ENCODE measurements at regions of chr2 and their contacts with region 1.

Region 1: GRCh38 chr2:133886735-133887660 is 318.7 kb upstream of the NCKAP5 start:
- DNase-seq: peak; percentile 51 to 68
- ATAC-seq: peak; percentile 57 to 89 (median 80)
- H3K4me3 ChIP-seq: no peak overlapping the region
- H3K27ac ChIP-seq: no peak overlapping the region
- H3K4me1 ChIP-seq: peaks cover 0 to 16% (median 10%) of the 10 kb centered on the region in 9 donors
- H3K27me3 ChIP-seq: peaks cover 0 to 5% (median 0%) of the 10 kb centered on the region in 7 donors
- CTCF ChIP-seq: peak; percentile 29 to 74 (median 62)

Region 2: GRCh38 chr2:134039912-134040581 is 153.0 kb after region 1 on chr2:
- intact Hi-C with region 1: no loop called
- DNase-seq: no peak
- ATAC-seq: no peak
- H3K4me3 ChIP-seq: no peak overlapping the region
- H3K27ac ChIP-seq: no peak overlapping the region
- H3K4me1 ChIP-seq: no peaks in the 10 kb centered on the region
- H3K27me3 ChIP-seq: peaks cover 0 to 3% (median 0%) of the 10 kb centered on the region in 7 donors
- CTCF ChIP-seq: no peak

Region 3: DNA sequence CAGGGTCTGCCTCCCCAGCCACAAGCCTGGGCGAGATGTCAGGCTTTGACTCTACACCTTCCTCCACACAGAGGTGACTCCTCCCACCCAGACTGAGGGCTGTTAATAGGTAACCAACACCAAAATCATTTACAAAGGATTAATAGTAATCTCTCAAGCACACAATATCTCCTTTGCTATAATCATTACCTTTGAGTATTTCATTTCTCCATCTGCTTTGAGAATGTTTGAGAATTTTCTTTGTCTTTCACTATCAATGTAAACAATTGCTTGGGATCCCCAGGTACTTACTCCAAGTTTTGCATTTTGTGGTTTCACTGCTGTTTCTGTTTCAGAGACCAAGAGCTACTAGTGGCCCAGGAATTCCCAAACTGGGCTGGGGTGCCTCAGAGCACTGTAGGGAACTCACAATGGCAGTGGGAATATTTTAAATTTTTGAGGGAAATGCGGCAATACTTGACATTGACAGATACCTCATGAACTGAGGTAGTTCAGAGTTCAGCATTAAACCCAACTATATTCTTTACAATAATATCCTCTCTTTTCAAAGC is 200.4 kb after region 1 on chr2:
- intact Hi-C with region 1: loop called in 1 of 10 experiments (anchors 10 kb)
- DNase-seq: no peak
- ATAC-seq: peak in 1 of 8 donors; percentile 49
- H3K4me3 ChIP-seq: no peak overlapping the region
- H3K27ac ChIP-seq: peak overlapping the region in 2 of 10 donors; percentile 24 to 53
- H3K4me1 ChIP-seq: peaks cover 0 to 11% (median 0%) of the 10 kb centered on the region in 9 donors
- H3K27me3 ChIP-seq: no peaks in the 10 kb centered on the region
- CTCF ChIP-seq: no peak

Region 4: DNA sequence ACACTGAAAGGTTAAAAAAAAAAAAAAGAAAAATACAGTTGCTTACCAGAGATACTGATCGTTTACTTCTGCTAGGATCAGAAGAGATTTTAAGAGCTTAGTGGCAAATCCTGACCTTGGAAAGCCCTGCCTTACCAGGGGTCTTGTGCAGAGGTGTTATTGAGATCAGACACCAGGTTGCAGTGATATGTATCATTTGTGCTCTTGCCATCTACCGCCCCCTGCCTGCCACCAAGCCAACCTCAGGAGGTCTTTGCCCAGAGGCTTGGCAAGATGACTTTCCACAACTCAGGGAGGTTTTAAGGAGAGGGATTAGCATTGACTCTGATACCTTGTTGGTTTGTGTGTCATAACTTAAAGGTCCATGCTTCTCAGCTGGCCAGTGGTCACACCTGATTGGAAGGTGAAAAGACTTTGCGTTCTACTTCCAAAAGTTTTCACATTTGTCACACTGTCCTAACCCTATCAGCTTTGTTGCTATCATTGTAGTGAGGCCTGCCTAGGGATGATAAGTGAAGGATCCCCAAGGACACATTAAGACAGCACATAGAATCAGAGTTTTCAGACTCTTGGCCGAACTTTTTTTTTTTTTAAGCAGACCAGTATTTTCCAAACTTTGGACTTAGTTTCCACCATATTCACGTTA is 320.7 kb after region 1 on chr2:
- intact Hi-C with region 1: loop called in 1 of 10 experiments (anchors 10 kb)
- DNase-seq: peak; percentile 52 to 60
- ATAC-seq: peak; percentile 63 to 86 (median 80)
- H3K4me3 ChIP-seq: no peak overlapping the region
- H3K27ac ChIP-seq: peak overlapping the region in 5 of 10 donors; percentile 3 to 63 (median 36)
- H3K4me1 ChIP-seq: peaks cover 14 to 58% (median 47%) of the 10 kb centered on the region in 9 donors
- H3K27me3 ChIP-seq: no peaks in the 10 kb centered on the region
- CTCF ChIP-seq: peak; percentile 38 to 76 (median 66)

Region 5: GRCh38 chr2:134253804-134254203 is 366.8 kb after region 1 on chr2 and contains the start of gene MGAT5:
- intact Hi-C with region 1: loop called in 5 of 10 experiments (anchors 5 to 10 kb)
- DNase-seq: no peak
- ATAC-seq: peak in 6 of 8 donors; percentile 5 to 70 (median 31)
- H3K4me3 ChIP-seq: no peak within 1 kb of the TSS
- H3K27ac ChIP-seq: peak within 1 kb of the TSS in 5 of 10 donors; percentile 0 to 37 (median 17)
- H3K4me1 ChIP-seq: peaks cover 5 to 75% (median 69%) of the 10 kb centered on the region in 9 donors
- H3K27me3 ChIP-seq: no peaks in the 10 kb centered on the region
- CTCF ChIP-seq: no peak
- total RNA-seq, gene MGAT5: 68.9 to 111 (median 94.6) TPM

Region 6: GRCh38 chr2:134402410-134402809 is 515.4 kb after region 1 on chr2:
- intact Hi-C with region 1: loop called in 1 of 10 experiments (anchors 5 kb)
- DNase-seq: peak in 1 of 2 donors; percentile 57
- ATAC-seq: peak; percentile 62 to 86 (median 76)
- H3K4me3 ChIP-seq: no peak overlapping the region
- H3K27ac ChIP-seq: peak overlapping the region in 9 of 10 donors; percentile 39 to 88 (median 71)
- H3K4me1 ChIP-seq: peaks cover 16 to 64% (median 47%) of the 10 kb centered on the region in 9 donors
- H3K27me3 ChIP-seq: no peaks in the 10 kb centered on the region
- CTCF ChIP-seq: no peak

Region 7: GRCh38 chr2:134446383-134447017 is 559.5 kb after region 1 on chr2:
- intact Hi-C with region 1: loop called in 6 of 10 experiments (anchors 5 to 10 kb)
- DNase-seq: no peak
- ATAC-seq: no peak
- H3K4me3 ChIP-seq: no peak overlapping the region
- H3K27ac ChIP-seq: no peak overlapping the region
- H3K4me1 ChIP-seq: peaks cover 0 to 42% (median 16%) of the 10 kb centered on the region in 9 donors
- H3K27me3 ChIP-seq: no peaks in the 10 kb centered on the region
- CTCF ChIP-seq: no peak

Region 8: DNA sequence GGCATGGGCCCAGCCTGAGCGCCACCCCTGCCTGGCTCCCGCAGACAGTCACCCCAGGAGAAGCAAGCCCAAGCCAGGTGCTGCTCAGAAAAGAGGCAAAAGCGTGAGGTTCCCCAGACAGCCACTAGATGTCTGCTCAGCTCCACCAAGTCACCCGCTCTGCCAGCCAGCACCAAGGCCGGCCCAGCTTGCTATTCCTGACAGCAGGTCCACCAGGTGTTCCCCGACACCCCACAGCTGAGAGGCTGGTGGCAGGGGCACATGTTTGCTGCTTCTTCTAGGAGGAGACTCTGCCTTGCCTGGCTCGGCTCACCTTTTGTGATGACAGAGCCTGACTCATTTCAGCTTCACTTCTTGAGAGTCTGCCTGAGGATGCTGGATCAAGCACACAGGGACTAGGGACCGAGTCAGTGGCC is 573.6 kb after region 1 on chr2:
- intact Hi-C with region 1: loop called in 3 of 10 experiments (anchors 10 kb)
- DNase-seq: peak; percentile 35 to 46
- ATAC-seq: peak; percentile 51 to 85 (median 76)
- H3K4me3 ChIP-seq: no peak overlapping the region
- H3K27ac ChIP-seq: no peak overlapping the region
- H3K4me1 ChIP-seq: peaks cover 0 to 9% (median 0%) of the 10 kb centered on the region in 9 donors
- H3K27me3 ChIP-seq: no peaks in the 10 kb centered on the region
- CTCF ChIP-seq: peak; percentile 23 to 74 (median 65)